GM12878 (cell line): ENCODE measurements at regions of chr4 and their contacts with region 1.

Region 1: GRCh38 chr4:40173470-40173875 is 23.4 kb upstream of the RHOH start:
- DNase-seq: no peak
- ATAC-seq: peak; percentile 82
- H3K4me3 ChIP-seq: no peak overlapping the region
- H3K27ac ChIP-seq: peak overlapping the region; percentile 45
- H3K4me1 ChIP-seq: peaks cover 21% of the 10 kb centered on the region
- H3K27me3 ChIP-seq: no peaks in the 10 kb centered on the region
- CTCF ChIP-seq: no peak
- EP300 ChIP-seq: no peak
- POLR2A ChIP-seq: peak; percentile 47
- RAD21 ChIP-seq: no peak

Region 2: GRCh38 chr4:40185830-40186664 is 12.6 kb after region 1 on chr4:
- CTCF ChIA-PET with region 1: interaction called, 17 read pairs
- POLR2A ChIA-PET with region 1: interaction called, 6 read pairs
- RAD21 ChIA-PET with region 1: interaction called, 42 read pairs
- SMC1A ChIA-PET with region 1: interaction called, 57 read pairs
- in situ Hi-C with region 1: no loop called
- intact Hi-C with region 1: loop called (anchors 2 kb)
- DNase-seq: peak; percentile 94
- ATAC-seq: peak; percentile 66
- H3K4me3 ChIP-seq: no peak overlapping the region
- H3K27ac ChIP-seq: peak overlapping the region; percentile 89
- H3K4me1 ChIP-seq: peaks cover 46% of the 10 kb centered on the region
- H3K27me3 ChIP-seq: no peaks in the 10 kb centered on the region
- CTCF ChIP-seq: no peak
- EP300 ChIP-seq: peak; percentile 81 to 90
- POLR2A ChIP-seq: 0 out of 2 replicates have a peak, but pooled peaks have one; percentile 31
- RAD21 ChIP-seq: 0 out of 2 replicates have a peak, but pooled peaks have one; percentile 0

Region 3: DNA sequence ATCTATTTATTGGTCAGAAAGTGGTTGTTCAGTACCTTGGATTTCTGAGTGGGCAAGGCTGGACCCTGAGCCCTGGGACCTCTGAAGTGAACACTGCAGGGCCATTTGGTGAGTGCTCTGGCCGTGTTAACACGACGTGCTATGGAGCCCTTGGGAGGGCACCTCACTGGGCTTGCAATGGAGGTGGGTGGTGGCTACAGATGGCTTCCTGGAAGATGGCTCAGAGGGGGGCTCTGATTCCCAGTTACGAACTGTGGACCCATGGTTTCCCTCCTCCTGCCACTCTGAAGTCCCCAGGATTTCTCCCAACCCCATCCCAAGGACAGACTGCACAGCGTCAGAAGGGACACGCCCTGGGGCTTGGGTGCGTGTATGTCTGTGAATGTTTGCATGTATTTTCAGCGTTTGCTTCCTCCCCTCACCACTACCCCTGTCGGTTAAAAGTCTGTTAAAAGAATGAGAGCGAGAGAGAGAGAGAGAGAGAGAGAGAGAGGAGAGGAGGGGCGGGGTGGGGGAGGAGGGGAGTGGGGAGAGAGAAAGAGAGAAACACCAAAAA is 19.6 kb after region 1 on chr4:
- CTCF ChIA-PET with region 1: interaction called, 3 read pairs
- POLR2A ChIA-PET with region 1: interaction called, 4 read pairs
- RAD21 ChIA-PET with region 1: interaction called, 42 read pairs
- SMC1A ChIA-PET with region 1: interaction called, 8 read pairs
- in situ Hi-C with region 1: no loop called
- intact Hi-C with region 1: no loop called
- DNase-seq: no peak
- ATAC-seq: peak; percentile 40
- H3K4me3 ChIP-seq: peak overlapping the region; percentile 88
- H3K27ac ChIP-seq: peak overlapping the region; percentile 92
- H3K4me1 ChIP-seq: peaks cover 9% of the 10 kb centered on the region
- H3K27me3 ChIP-seq: no peaks in the 10 kb centered on the region
- CTCF ChIP-seq: 0 out of 6 replicates have a peak, but pooled peaks of 1 of the 3 experiments have one; percentile 3
- EP300 ChIP-seq: 0 out of 4 replicates have a peak, but pooled peaks of 1 of the 2 experiments have one; percentile 25
- POLR2A ChIP-seq: peak; percentile 81
- RAD21 ChIP-seq: peak; percentile 17; the same call in 1 of the 2 replicates

Region 4: GRCh38 chr4:40264995-40265909 is 91.8 kb after region 1 on chr4:
- CTCF ChIA-PET with region 1: no interaction called
- POLR2A ChIA-PET with region 1: no interaction called
- RAD21 ChIA-PET with region 1: no interaction called
- SMC1A ChIA-PET with region 1: no interaction called
- in situ Hi-C with region 1: no loop called
- intact Hi-C with region 1: no loop called
- DNase-seq: no peak
- ATAC-seq: peak; percentile 57
- H3K4me3 ChIP-seq: no peak overlapping the region
- H3K27ac ChIP-seq: no peak overlapping the region
- H3K4me1 ChIP-seq: peaks cover 9% of the 10 kb centered on the region
- H3K27me3 ChIP-seq: no peaks in the 10 kb centered on the region
- CTCF ChIP-seq: no peak
- EP300 ChIP-seq: no peak
- POLR2A ChIP-seq: no peak
- RAD21 ChIP-seq: no peak